Gastrocnemius medialis (tissue), 4 donors: ENCODE measurements at regions of chr20 and their contacts with region 1.

Region 1: DNA sequence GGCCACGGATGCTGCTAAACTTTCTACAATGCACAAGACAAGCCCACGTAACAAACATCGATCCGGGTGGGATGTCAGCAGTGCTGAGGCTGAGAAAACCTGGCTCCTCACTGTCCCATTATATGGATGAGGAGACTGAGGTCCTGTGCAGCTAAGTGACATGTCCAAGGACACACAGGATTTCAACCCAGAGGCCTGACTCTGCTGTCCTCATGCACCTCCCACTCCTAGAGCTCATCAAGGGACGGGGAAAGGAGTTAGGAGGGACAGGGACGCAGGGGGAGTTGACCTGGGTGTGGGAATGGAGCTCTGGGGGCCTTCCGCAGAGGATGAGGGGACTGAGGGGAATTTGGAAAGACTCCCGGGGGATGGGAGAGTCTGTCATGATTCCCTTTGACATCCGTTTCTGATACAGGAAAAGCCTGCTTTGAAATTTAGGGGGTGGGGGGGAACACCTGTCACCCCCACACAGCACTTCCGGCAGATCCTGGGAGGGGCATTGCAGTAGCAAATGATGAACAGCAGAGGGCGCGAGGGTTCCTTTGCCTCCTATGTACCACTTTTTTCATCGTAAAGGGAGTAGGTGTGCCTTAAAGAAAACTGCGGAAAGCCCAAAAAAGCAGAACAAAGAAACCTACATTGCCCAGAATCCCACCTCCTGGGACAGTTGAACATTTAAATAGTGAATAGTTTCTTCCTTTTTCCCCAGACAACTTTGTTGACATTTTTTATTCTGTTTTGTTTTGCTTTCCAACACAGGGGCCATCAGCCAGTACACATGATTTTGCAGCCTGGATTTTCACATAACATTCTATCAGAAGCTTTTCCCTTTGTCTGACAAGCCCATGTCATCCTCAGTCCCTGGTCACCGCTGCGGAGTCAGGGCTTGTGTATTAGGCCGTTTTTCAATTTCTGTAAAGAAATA is 48.6 kb downstream of the SLC2A10 start:
- DNase-seq: no peak
- ATAC-seq: peak in 1 of 2 donors; percentile 51
- H3K4me3 ChIP-seq: no peak overlapping the region
- H3K27ac ChIP-seq: no peak overlapping the region
- H3K4me1 ChIP-seq: no peaks in the 10 kb centered on the region
- H3K27me3 ChIP-seq: no peaks in the 10 kb centered on the region
- CTCF ChIP-seq: peak; percentile 45 to 78 (median 62)
- POLR2A ChIP-seq: no peak

Region 2: DNA sequence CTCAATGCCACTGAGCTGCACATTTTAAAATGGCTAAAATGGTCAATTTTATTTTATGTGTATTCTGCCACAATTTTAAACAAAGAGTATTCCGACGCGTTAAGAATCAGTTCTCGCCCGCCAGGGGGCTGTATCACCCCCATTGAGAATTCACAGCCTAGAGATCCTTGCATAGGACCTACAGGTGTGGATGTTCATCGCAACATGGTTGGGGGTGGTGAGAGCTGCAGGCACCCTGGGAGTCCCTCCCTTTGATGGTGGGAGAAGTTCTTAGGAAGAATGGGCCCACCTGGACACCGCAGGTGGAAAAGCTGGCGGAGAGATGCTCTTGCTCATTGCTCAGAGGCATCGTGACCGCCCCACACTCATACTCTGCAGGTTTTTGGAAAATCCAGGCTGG is 14.9 kb after region 1 on chr20:
- in situ Hi-C with region 1: no loop called
- intact Hi-C with region 1: no loop called
- DNase-seq: no peak
- ATAC-seq: no peak
- H3K4me3 ChIP-seq: no peak overlapping the region
- H3K27ac ChIP-seq: no peak overlapping the region
- H3K4me1 ChIP-seq: no peaks in the 10 kb centered on the region
- H3K27me3 ChIP-seq: peaks cover 0 to 5% (median 0%) of the 10 kb centered on the region in 3 donors
- CTCF ChIP-seq: no peak
- POLR2A ChIP-seq: no peak

Region 3: DNA sequence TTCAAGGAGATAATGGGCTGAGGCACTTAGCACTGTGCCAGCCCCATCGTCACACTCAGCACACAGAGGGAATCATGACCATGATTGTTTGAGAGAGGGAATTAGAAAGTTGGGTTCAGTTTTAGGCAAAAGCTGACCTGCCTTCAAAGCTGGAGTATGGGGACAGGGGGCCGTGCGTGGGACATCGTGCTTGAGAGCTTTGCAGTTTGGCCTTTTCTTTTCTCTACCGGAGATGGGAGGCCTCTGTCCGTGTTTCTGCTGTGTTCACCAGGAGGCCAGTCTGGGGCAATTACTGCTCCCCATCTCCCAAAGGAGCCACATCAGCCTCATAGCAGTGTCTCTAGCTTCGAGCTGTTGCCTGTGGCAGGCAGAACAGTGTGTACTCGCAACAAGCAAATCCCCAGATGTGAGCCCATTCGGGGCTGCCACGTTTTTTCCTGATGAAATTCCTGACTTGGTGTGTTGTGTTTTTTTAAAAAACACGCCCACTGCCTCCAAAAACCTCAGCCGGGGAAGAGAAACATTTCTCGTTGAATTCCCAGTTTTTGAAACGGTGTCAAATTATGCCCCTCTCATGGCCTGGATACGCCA is 156.9 kb after region 1 on chr20:
- in situ Hi-C with region 1: no loop called
- intact Hi-C with region 1: no loop called
- DNase-seq: peak; percentile 62 to 77
- ATAC-seq: peak; percentile 79 to 86
- H3K4me3 ChIP-seq: no peak overlapping the region
- H3K27ac ChIP-seq: peak overlapping the region; percentile 28 to 71 (median 50)
- H3K4me1 ChIP-seq: no peaks in the 10 kb centered on the region
- H3K27me3 ChIP-seq: peaks cover 0 to 3% (median 0%) of the 10 kb centered on the region in 3 donors
- CTCF ChIP-seq: no peak
- POLR2A ChIP-seq: peak in 1 of 2 donors; percentile 11

Region 4: GRCh38 chr20:46970923-46971616 is 213.1 kb after region 1 on chr20:
- in situ Hi-C with region 1: no loop called
- intact Hi-C with region 1: no loop called
- DNase-seq: no peak
- ATAC-seq: no peak
- H3K4me3 ChIP-seq: no peak overlapping the region
- H3K27ac ChIP-seq: no peak overlapping the region
- H3K4me1 ChIP-seq: no peaks in the 10 kb centered on the region
- H3K27me3 ChIP-seq: no peaks in the 10 kb centered on the region
- CTCF ChIP-seq: no peak
- POLR2A ChIP-seq: no peak

Region 5: DNA sequence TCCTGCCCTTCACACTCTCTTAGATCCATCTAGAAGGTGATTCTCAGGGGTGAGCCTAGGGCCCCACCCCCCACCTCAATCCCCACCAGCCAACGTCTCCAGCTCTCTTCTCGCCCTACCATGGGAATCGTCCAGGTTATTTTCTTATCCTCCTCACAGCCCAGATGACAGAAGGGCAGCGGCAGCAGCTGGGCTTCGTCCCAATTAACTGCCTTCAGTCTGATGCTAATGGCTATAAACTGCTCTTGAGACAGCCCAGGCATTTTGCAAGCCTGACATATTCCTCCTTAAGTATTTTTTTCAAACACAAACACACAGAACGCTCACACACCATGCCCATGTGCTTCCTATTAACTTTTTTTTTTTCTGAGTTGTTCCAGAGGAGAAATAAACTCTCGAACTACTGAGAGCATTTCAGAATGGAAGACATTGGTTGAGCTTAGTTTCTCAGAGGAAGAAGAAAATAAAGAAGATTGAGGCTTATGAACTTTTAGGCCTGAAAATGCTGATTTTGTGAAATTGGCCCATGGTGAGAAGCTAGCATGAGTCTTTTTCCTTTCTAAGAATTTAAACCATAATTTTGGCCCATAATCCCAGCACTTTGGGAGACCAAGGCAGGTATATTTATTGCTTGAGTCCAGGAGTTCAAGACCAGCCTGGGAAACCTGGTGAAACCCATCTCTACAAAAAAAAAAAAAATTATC is 261.3 kb after region 1 on chr20:
- in situ Hi-C with region 1: loop called in 1 of 4 experiments (anchors 25 kb)
- intact Hi-C with region 1: no loop called
- DNase-seq: no peak
- ATAC-seq: peak in 1 of 2 donors; percentile 70
- H3K4me3 ChIP-seq: no peak overlapping the region
- H3K27ac ChIP-seq: no peak overlapping the region
- H3K4me1 ChIP-seq: no peaks in the 10 kb centered on the region
- H3K27me3 ChIP-seq: no peaks in the 10 kb centered on the region
- CTCF ChIP-seq: no peak
- POLR2A ChIP-seq: no peak

Region 6: DNA sequence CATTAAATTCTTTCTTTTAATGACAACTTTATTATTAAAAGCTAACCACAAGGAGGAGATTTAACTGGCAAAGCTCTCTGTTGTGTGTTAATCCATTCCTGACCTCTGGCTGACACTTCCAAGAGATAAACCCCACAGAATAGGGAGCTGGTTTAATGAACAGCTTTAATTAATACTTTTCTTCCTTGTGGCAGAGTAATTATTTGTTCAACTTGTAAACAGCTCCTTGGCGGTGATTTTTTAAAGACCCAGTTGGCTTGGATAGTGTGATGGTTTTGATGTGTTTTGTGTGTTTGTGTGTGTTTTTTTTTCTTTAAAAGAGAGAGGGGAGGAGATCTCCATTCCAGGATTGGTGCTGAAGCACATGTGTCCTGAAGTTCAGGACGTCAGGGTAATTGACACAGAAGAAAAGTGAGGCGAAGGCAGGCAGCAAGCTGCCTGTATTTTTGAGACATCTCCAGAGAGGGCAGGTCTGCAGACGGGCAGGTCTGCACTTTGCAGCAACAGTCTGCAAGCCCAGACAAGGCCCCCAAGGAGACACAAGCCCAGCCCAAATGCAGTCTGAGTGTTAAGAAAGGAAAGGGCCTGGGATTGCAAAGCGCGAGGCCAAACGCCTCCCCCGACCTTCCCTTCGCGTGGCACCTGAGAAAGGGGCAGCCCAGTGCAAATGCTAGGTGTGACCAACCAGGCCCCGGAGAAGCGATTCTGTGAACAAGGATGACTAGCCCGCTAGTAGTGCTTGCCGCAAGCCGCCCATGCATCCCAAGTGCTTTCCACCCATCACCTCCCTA is 367.8 kb after region 1 on chr20:
- in situ Hi-C with region 1: loop called in 1 of 4 experiments (anchors 25 kb)
- intact Hi-C with region 1: no loop called
- DNase-seq: no peak
- ATAC-seq: peak in 1 of 2 donors; percentile 26
- H3K4me3 ChIP-seq: no peak overlapping the region
- H3K27ac ChIP-seq: peak overlapping the region; percentile 46 to 70 (median 60)
- H3K4me1 ChIP-seq: peaks cover 5 to 18% of the 10 kb centered on the region in 2 donors
- H3K27me3 ChIP-seq: no peaks in the 10 kb centered on the region
- CTCF ChIP-seq: no peak
- POLR2A ChIP-seq: no peak

Region 7: DNA sequence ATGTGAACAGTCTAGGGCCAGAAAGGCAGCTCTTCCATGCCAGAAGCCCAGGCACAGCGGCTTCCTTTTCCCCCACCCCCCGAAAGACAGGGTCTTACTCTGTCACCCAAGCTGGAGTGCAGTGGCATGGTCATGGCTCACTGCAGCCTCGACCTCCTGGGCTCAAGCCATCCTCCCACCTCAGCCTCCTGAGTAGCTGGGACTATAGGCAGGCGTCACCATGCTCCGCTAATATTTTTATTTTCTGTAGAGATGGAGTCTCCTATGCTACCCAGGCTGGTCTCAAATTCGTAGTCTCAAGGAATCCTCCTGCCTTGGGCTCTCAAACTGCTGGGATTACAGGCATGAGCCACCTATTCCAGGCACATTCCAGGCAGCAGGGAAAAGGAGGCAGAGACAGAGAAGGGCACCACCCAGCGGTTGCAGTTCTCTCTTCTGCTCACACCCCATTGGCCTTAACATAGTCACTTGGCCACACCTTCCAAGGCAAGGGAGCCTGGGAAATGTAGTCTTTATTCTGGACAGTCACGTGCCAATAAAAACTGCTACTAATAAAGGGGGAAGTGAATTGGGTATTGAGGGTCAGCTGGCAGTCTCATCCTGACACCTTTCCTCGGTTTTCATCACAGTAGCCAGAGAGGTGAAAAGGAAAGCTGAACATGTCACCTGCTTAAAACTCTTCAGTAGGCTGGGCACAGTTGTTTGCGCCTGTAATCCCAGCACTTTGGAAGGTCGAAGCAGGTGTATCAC is 392.6 kb after region 1 on chr20:
- in situ Hi-C with region 1: loop called (anchors 5 to 25 kb)
- intact Hi-C with region 1: loop called (anchors 1 kb)
- DNase-seq: peak; percentile 6 to 49
- ATAC-seq: peak; percentile 58 to 72
- H3K4me3 ChIP-seq: no peak overlapping the region
- H3K27ac ChIP-seq: no peak overlapping the region
- H3K4me1 ChIP-seq: no peaks in the 10 kb centered on the region
- H3K27me3 ChIP-seq: peaks cover 0 to 3% (median 0%) of the 10 kb centered on the region in 3 donors
- CTCF ChIP-seq: peak in 3 of 5 experiments; percentile 35 to 42 (median 42)
- POLR2A ChIP-seq: no peak